ENCODE measurements at regions of chr18 and their contacts with region 1.

Region 1: GRCh38 chr18:61651883-61652268 is 240.9 kb downstream of the RNF152 start:
- DNase-seq: peak in 1 of 2 donors; percentile 59
- H3K4me3 ChIP-seq: no peak overlapping the region
- H3K27ac ChIP-seq: peak overlapping the region; percentile 89 to 91
- H3K4me1 ChIP-seq: no peaks in the 10 kb centered on the region
- H3K27me3 ChIP-seq: no peaks in the 10 kb centered on the region
- CTCF ChIP-seq: no peak
- POLR2A ChIP-seq: no peak

Region 2: GRCh38 chr18:61587865-61588264 is 64.0 kb before region 1 on chr18:
- intact Hi-C with region 1: loop called (anchors 2 kb)
- DNase-seq: no peak
- H3K4me3 ChIP-seq: no peak overlapping the region
- H3K27ac ChIP-seq: no peak overlapping the region
- H3K4me1 ChIP-seq: no peaks in the 10 kb centered on the region
- H3K27me3 ChIP-seq: no peaks in the 10 kb centered on the region
- CTCF ChIP-seq: no peak
- POLR2A ChIP-seq: no peak

Region 3: GRCh38 chr18:61842146-61842545 is 190.3 kb after region 1 on chr18:
- intact Hi-C with region 1: no loop called
- DNase-seq: no peak
- H3K4me3 ChIP-seq: no peak overlapping the region
- H3K27ac ChIP-seq: peak overlapping the region; percentile 21 to 48
- H3K4me1 ChIP-seq: no peaks in the 10 kb centered on the region
- H3K27me3 ChIP-seq: no peaks in the 10 kb centered on the region
- CTCF ChIP-seq: no peak
- POLR2A ChIP-seq: no peak